ENCODE measurements at regions of chr10 and their contacts with region 1.

Region 1: GRCh38 chr10:102185811-102186527 is 33.8 kb downstream of the NOLC1 start:
- DNase-seq: no peak
- H3K4me3 Mint-ChIP-seq: no peak overlapping the region
- H3K27ac Mint-ChIP-seq: peak overlapping the region; percentile 58
- H3K4me1 Mint-ChIP-seq: peaks cover 17% of the 10 kb centered on the region
- H3K27me3 Mint-ChIP-seq: peaks cover 6% of the 10 kb centered on the region

Region 2: GRCh38 chr10:102196893-102197292 is 10.9 kb after region 1 on chr10:
- intact Hi-C with region 1: loop called (anchors 1 kb)
- DNase-seq: no peak
- H3K4me3 Mint-ChIP-seq: no peak overlapping the region
- H3K27ac Mint-ChIP-seq: peak overlapping the region; percentile 74
- H3K4me1 Mint-ChIP-seq: peaks cover 8% of the 10 kb centered on the region
- H3K27me3 Mint-ChIP-seq: no peaks in the 10 kb centered on the region